ENCODE measurements at regions of chr7 and their contacts with region 1.

Region 1: DNA sequence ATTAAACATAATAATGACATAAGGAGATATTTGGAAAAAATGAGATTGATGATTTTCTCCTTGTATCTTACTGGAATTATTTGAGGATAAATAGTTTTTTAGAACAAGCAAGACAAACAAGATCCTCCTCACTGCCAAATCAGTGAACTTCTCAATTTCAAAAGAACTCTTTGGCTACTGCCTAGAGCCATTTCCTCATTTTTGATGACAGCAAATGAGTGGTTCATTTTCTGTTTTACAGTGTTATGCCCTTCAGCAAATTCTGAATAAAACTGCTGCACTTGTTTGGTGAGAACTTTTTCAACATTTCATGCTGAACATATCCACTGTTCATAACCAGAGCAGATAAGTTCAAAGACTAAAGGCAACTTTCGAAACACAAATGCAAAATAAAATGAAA is 42.5 kb upstream of the AHR start:
- DNase-seq: no peak
- H3K4me3 Mint-ChIP-seq: no peak overlapping the region
- H3K27ac Mint-ChIP-seq: no peak overlapping the region
- H3K4me1 Mint-ChIP-seq: peaks cover 8% of the 10 kb centered on the region
- H3K27me3 Mint-ChIP-seq: no peaks in the 10 kb centered on the region

Region 2: DNA sequence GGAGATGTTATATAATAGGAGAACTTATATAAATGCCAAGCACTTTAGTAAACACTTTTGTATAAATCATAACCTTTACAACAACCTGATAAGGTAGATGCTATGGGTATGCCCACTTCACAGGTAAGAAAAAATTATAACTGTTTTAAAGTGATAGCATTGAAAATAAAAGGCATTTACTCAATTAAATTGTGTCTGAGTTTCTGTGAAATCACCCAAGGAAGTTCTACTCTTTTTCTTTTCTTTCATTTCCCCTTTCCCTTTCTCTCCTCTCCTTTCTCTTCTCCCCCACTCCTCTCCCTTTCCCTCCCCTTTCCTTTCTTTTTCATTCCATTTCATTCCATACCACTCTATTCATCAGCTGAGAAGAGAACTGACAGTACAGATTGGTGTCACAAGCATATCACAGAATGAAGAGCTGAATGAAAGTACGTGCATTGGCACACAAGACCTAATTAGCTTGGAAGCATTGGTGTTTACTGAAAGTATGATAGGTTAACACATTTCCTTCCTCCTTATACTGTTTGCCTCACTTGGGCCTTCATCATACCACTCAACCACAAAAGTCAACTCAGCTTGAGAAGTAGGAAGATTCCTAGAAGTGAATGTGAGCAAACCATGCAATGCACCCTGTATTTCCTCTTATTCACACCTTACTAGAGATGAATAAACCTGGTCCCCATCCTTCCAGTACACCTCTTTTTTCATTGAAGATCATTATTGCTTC is 256.2 kb before region 1 on chr7:
- intact Hi-C with region 1: loop called (anchors 1 kb)
- DNase-seq: peak; percentile 76
- H3K4me3 Mint-ChIP-seq: peak overlapping the region; percentile 63
- H3K27ac Mint-ChIP-seq: peak overlapping the region; percentile 84
- H3K4me1 Mint-ChIP-seq: peaks cover 15% of the 10 kb centered on the region
- H3K27me3 Mint-ChIP-seq: peaks cover 6% of the 10 kb centered on the region

Region 3: GRCh38 chr7:17134786-17135185 is 121.1 kb before region 1 on chr7:
- intact Hi-C with region 1: loop called (anchors 1 kb)
- DNase-seq: peak; percentile 71
- H3K4me3 Mint-ChIP-seq: peak overlapping the region; percentile 29
- H3K27ac Mint-ChIP-seq: peak overlapping the region; percentile 35
- H3K4me1 Mint-ChIP-seq: peaks cover 56% of the 10 kb centered on the region
- H3K27me3 Mint-ChIP-seq: no peaks in the 10 kb centered on the region

Region 4: DNA sequence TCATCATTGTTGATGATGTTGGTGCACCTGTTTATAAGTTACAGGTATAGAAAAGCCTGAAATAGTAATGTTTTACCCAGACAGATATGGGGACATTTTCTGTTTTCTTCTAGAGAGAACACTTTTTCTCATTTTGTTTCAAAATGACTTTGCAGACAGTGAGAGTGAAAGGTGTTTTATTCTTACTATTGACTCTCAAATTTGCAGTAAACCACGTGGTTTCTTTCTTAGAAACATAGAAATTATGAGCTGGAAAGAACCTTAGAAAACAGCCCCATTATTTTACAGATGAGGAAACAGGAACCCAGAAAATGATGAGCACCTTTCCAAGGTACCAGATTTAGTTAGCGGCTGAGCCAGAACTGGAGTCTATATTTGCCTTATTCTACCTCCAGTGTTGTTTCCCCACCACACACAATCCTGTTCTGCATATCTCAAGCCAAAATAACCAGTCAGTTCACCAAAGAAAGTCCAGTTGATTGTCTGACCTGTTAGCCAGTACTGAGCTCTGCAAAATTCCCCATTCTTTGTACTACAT is 96.4 kb before region 1 on chr7:
- intact Hi-C with region 1: loop called (anchors 1 kb)
- DNase-seq: peak; percentile 66
- H3K4me3 Mint-ChIP-seq: peak overlapping the region; percentile 2
- H3K27ac Mint-ChIP-seq: peak overlapping the region; percentile 78
- H3K4me1 Mint-ChIP-seq: peaks cover 37% of the 10 kb centered on the region
- H3K27me3 Mint-ChIP-seq: peaks cover 13% of the 10 kb centered on the region

Region 5: GRCh38 chr7:17239683-17240521 is 16.0 kb before region 1 on chr7:
- intact Hi-C with region 1: no loop called
- DNase-seq: no peak
- H3K4me3 Mint-ChIP-seq: no peak overlapping the region
- H3K27ac Mint-ChIP-seq: no peak overlapping the region
- H3K4me1 Mint-ChIP-seq: peaks cover 20% of the 10 kb centered on the region
- H3K27me3 Mint-ChIP-seq: no peaks in the 10 kb centered on the region

Region 6: DNA sequence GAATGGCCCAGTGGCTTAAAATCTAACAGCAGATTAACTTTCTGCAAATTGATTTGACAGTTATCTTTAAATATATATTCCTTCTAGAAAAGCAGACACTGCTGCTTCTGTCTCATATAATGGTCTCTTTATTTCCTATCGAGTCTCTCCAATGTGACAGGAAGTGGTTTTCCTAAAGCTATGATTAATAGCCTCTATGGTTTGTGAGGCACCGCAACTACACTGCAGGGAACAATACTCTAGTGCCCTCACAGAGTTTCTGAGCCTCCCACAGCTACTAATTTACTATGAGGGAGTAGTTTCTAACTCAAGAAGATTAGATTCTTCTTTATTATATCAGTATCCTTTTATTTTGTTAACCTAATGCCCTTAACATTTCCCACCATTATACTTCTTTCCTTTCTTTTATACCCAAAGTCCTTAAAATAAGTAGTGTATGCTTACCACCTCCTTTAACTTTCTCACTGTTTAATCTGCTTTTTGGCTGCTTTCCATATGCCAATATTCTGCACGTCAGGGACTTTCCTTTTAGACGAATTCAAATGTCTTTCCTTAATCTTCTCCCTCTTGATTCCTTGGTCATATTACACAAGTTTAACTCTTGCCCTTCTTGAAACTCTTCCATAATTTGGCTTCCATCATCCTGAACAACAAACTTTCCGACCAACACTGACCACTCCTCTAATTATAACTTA is 18.8 kb after region 1 on chr7:
- intact Hi-C with region 1: loop called (anchors 1 kb)
- DNase-seq: peak; percentile 57
- H3K4me3 Mint-ChIP-seq: no peak overlapping the region
- H3K27ac Mint-ChIP-seq: no peak overlapping the region
- H3K4me1 Mint-ChIP-seq: peaks cover 11% of the 10 kb centered on the region
- H3K27me3 Mint-ChIP-seq: no peaks in the 10 kb centered on the region

Region 7: GRCh38 chr7:17342756-17343155 is 86.8 kb after region 1 on chr7:
- intact Hi-C with region 1: no loop called
- DNase-seq: no peak
- H3K4me3 Mint-ChIP-seq: no peak overlapping the region
- H3K27ac Mint-ChIP-seq: no peak overlapping the region
- H3K4me1 Mint-ChIP-seq: peaks cover 7% of the 10 kb centered on the region
- H3K27me3 Mint-ChIP-seq: no peaks in the 10 kb centered on the region